ENCODE measurements at regions of chr14 and their contacts with region 1.

Region 1: GRCh38 chr14:20454516-20455354 is at the starts of genes APEX1 and OSGEP:
- DNase-seq: peak; percentile 99
- ATAC-seq: peak; percentile 97
- H3K4me3 ChIP-seq: peak within 1 kb of the TSS; percentile 61
- H3K27ac ChIP-seq: peak within 1 kb of the TSS; percentile 89
- H3K4me1 ChIP-seq: peaks cover 3% of the 10 kb centered on the region
- H3K27me3 ChIP-seq: no peaks in the 10 kb centered on the region
- total RNA-seq, gene APEX1: 71.5 to 95.2 (median 90.3) TPM
- total RNA-seq, gene OSGEP: 17.6 to 21.9 (median 19.5) TPM

Region 2: GRCh38 chr14:20343092-20343861 is 111.5 kb before region 1 on chr14 and contains the start of gene PARP2:
- intact Hi-C with region 1: loop called in 1 of 4 experiments (anchors 10 kb)
- DNase-seq: peak; percentile 98 to 99 (median 99)
- ATAC-seq: peak; percentile 99
- H3K4me3 ChIP-seq: peak within 1 kb of the TSS; percentile 99
- H3K27ac ChIP-seq: peak within 1 kb of the TSS; percentile 79
- H3K4me1 ChIP-seq: no peaks in the 10 kb centered on the region
- H3K27me3 ChIP-seq: no peaks in the 10 kb centered on the region
- total RNA-seq, gene PARP2: 11.9 to 17.9 (median 16.3) TPM

Measured in right cardiac atrium (tissue), 5 donors.